ENCODE measurements at regions of chr11 and their contacts with region 1.

Region 1: GRCh38 chr11:101096036-101096704 is 33.4 kb downstream of the PGR start:
- DNase-seq: peak in 4 of 5 donors; percentile 28 to 52 (median 41)
- H3K4me3 ChIP-seq: no peak overlapping the region
- H3K27ac ChIP-seq: no peak overlapping the region
- H3K4me1 ChIP-seq: peaks cover 9% of the 10 kb centered on the region
- H3K27me3 ChIP-seq: no peaks in the 10 kb centered on the region
- CTCF ChIP-seq: no peak
- EP300 ChIP-seq: no peak
- POLR2A ChIP-seq: no peak

Region 2: GRCh38 chr11:101061606-101062005 is 34.6 kb before region 1 on chr11:
- intact Hi-C with region 1: loop called in 1 of 4 experiments (anchors 1 kb)
- DNase-seq: no peak
- H3K4me3 ChIP-seq: no peak overlapping the region
- H3K27ac ChIP-seq: no peak overlapping the region
- H3K4me1 ChIP-seq: peaks cover 1% of the 10 kb centered on the region
- H3K27me3 ChIP-seq: no peaks in the 10 kb centered on the region
- CTCF ChIP-seq: no peak
- EP300 ChIP-seq: no peak
- POLR2A ChIP-seq: no peak